ENCODE measurements at regions of chr20 and their contacts with region 1.

Region 1: DNA sequence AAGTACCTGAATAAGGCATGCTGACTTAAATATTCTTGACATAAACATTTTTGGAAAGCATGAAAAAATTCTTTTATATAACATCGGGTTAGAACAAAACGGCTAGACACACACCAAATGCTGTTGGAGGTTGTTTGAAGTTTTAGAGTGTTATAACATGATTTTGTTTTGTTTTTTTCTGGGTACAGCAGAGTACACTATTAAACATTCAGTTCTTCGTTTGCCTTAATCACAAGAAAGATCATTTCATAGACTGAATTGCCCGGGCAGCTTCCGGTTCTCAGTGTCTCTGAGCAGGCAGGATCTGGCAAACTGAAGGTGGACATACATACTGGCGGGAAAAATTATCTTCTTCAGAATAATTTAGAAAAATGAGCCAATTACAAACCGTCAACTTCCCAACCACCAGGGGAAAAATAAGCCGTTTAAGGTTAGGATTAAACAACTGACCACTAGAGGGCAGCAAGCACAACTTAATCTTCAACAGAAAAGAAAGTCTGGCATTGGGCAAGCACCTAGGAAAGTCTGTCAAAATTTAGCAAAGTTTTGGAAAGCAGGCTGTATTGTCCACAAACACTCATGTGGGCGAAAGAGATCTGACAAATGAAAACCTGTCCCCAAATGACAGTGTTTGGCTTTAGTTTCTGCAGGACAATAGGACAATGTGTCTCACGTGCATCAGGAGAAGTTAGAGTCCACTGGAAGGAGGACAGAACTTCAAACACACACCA is 15.0 kb downstream of the ZNF217 start:
- DNase-seq: peak; percentile 57 to 91 (median 72)
- ATAC-seq: peak; percentile 80
- H3K4me3 ChIP-seq: no peak overlapping the region
- H3K27ac ChIP-seq: peak overlapping the region; percentile 80
- H3K4me1 ChIP-seq: peaks cover 5 to 17% of the 10 kb centered on the region in 2 experiments; a peak in 4 of 5 replicates
- H3K27me3 ChIP-seq: no peaks in the 10 kb centered on the region
- CTCF ChIP-seq: peak; percentile 83 to 97 (median 97)
- EP300 ChIP-seq: peak; percentile 41
- POLR2A ChIP-seq: no peak
- RAD21 ChIP-seq: peak; percentile 88 to 94

Region 2: DNA sequence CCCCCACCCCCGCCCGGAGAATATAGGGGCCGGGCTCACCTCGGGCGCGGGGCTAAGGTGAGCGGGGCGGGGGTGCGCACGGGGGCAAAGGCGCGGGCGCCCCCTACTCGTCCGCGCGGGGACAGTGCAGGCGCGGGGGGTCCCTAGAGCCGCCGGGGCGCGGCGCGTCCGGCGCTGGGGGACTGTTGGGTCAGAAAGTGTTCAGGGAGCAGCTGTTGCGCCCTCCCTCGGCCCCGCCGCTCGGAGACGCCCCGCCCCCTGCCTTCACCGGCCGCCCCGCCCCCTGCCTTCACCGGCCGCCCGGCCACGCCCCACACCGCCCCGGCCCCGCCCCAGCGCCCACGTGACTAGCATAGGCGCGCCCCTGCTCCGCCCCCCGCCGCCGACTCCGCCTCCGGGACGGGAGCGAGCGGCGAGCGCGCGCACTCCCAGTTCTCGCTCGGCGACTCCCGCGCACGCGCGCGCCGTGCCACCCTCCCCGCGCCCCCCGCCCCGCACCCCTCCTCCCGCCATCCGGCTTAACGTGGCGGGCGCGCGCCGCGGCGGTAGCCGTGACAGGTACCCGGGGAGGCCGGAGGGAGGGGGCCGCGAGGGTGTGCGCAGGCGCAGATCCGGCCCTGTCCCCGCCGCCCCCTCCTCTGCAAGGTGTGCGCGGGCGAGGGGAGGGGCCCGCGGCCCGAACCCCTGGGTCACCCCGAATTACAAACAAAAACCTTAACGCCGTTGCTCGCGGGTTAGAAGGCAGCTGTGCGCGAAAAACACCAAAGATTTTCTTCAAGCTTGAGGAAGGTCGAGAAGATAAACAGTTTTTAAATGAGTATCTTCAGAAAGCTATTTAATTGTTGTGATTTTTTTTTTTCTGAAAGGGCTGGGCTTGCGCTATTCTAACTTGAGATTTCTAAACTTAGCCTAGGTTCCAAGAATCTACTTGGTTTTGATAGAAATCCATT is 15.7 kb after region 1 on chr20:
- CTCF ChIA-PET with region 1: no interaction called
- POLR2A ChIA-PET with region 1: interaction called, 3 read pairs
- in situ Hi-C with region 1: no loop called
- intact Hi-C with region 1: loop called (anchors 2 kb)
- DNase-seq: peak; percentile 85 to 92 (median 88)
- ATAC-seq: peak; percentile 76
- H3K4me3 ChIP-seq: peak overlapping the region; percentile 90
- H3K27ac ChIP-seq: peak overlapping the region; percentile 93
- H3K4me1 ChIP-seq: peaks cover 8 to 15% of the 10 kb centered on the region in 2 experiments; a peak in 4 of 5 replicates
- H3K27me3 ChIP-seq: no peaks in the 10 kb centered on the region
- CTCF ChIP-seq: peak in 2 of 3 experiments; percentile 59 to 79; a peak in 4 of 6 replicates
- EP300 ChIP-seq: no peak
- POLR2A ChIP-seq: no peak
- RAD21 ChIP-seq: peak; percentile 12 to 58; a peak in 2 of 4 replicates

Region 3: GRCh38 chr20:53643031-53643832 is 64.6 kb after region 1 on chr20:
- CTCF ChIA-PET with region 1: no interaction called
- POLR2A ChIA-PET with region 1: interaction called, 3 read pairs
- in situ Hi-C with region 1: no loop called
- intact Hi-C with region 1: loop called (anchors 2 kb)
- DNase-seq: peak; percentile 37 to 75 (median 52)
- ATAC-seq: peak; percentile 83
- H3K4me3 ChIP-seq: no peak overlapping the region; the same call in 1 of the 2 replicates
- H3K27ac ChIP-seq: peak overlapping the region; percentile 95
- H3K4me1 ChIP-seq: peaks cover 23 to 25% of the 10 kb centered on the region in 2 experiments
- H3K27me3 ChIP-seq: no peaks in the 10 kb centered on the region
- CTCF ChIP-seq: no peak
- EP300 ChIP-seq: peak; percentile 60; the same call in 1 of the 2 replicates
- POLR2A ChIP-seq: no peak; the same call in none of the 2 replicates
- RAD21 ChIP-seq: peak in 1 of 2 experiments; percentile 9; a peak in 1 of 4 replicates

Region 4: DNA sequence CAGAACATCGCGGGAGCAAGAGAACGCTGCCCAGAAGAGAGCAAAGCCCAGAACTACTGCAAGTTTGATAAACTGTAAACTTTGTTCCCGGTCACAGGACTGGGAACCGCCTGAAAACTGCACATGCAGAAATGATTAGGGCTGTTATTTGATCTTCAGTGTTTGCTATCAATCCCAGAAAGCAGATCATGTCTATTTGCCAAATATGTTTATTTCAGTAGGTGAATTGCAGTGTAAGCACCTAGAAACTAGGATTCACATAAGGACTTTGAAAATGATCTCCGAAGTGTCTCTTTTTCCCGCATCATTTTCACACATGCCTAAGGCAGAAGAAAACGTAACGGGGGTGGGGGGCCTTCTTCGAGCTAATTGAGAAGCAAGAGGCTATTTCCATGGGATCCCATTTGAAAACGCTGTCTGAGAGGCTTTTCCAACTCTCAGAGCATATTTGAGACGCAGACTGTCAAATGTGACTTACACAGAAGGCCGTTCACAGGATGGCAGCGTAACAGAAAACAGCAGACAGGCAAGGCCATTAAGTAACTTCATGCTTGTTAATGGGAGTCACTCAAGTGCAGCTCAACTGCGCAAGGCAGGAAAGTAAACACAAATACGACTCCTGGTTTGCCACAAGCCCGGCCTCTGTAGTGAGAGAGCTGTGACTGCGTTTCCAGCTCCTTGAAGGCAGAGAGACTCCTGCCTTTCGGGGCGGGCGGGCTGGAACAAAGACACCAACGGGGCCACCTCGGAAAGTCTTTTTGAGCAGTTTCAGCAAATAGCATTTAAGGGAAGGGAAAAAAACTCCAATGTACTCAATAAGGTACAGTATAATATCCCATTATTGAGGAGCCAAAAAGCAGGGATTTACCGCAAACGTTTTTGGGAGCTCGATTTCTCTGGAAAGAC is 159.6 kb after region 1 on chr20:
- CTCF ChIA-PET with region 1: no interaction called
- POLR2A ChIA-PET with region 1: interaction called, 3 read pairs
- in situ Hi-C with region 1: no loop called
- intact Hi-C with region 1: loop called (anchors 5 kb)
- DNase-seq: peak; percentile 35 to 86 (median 56)
- ATAC-seq: peak; percentile 73
- H3K4me3 ChIP-seq: 0 out of 2 replicates have a peak overlapping the region, but pooled peaks have one; percentile 1
- H3K27ac ChIP-seq: peak overlapping the region; percentile 83
- H3K4me1 ChIP-seq: peaks cover 7 to 40% of the 10 kb centered on the region in 2 experiments
- H3K27me3 ChIP-seq: no peaks in the 10 kb centered on the region
- CTCF ChIP-seq: no peak
- EP300 ChIP-seq: no peak
- POLR2A ChIP-seq: peak; percentile 63
- RAD21 ChIP-seq: peak in 1 of 2 experiments; percentile 15; a peak in 1 of 4 replicates

Region 5: DNA sequence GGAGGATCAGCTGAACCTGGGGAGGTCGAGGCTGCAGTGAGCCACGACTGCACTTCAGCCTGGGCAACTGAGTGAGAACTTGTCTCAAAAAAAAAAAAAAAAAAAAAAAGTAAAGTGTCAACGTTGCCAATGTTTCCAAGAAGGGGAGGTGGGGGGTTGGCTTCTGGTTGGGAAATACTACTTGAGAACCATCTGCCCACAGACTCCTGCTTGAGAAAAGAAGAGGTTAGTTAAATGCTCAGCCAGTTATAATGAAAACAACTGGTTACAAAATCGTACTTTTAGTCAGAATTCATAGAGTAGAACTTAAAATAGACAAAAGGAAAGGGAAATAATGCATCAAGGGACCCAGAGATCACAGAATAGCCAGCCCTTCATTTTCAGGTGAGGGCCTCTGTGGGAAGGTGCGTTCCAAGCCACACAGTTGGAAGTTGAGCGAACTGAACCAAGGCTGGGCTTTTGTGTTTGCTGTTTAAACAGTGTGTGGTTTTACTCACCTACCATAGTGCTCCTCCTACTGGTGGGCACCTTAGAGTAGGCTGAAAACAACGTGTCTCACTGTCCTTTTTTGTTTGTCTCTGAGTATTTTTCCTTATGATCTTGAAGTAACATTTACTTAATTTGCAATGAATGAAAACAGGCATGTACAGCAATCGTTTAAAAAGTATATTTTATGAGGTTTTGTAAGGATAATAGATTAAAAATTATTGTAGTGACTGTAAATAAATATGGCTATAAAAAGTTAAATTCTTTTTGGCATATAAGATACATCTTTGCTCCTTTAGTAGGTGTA is 291.0 kb after region 1 on chr20:
- CTCF ChIA-PET with region 1: interaction called, 12 read pairs
- POLR2A ChIA-PET with region 1: interaction called, 3 read pairs
- in situ Hi-C with region 1: no loop called
- intact Hi-C with region 1: no loop called
- DNase-seq: peak; percentile 54 to 90 (median 64)
- ATAC-seq: peak; percentile 93
- H3K4me3 ChIP-seq: no peak overlapping the region
- H3K27ac ChIP-seq: peak overlapping the region; percentile 48
- H3K4me1 ChIP-seq: peaks cover 2 to 10% of the 10 kb centered on the region in 2 experiments; a peak in 3 of 5 replicates
- H3K27me3 ChIP-seq: no peaks in the 10 kb centered on the region
- CTCF ChIP-seq: peak; percentile 75 to 88 (median 85)
- EP300 ChIP-seq: no peak
- POLR2A ChIP-seq: no peak
- RAD21 ChIP-seq: peak; percentile 88 to 90

Region 6: GRCh38 chr20:53915446-53916172 is 337.0 kb after region 1 on chr20:
- CTCF ChIA-PET with region 1: interaction called, 33 read pairs
- POLR2A ChIA-PET with region 1: interaction called, 5 read pairs
- in situ Hi-C with region 1: no loop called
- intact Hi-C with region 1: loop called (anchors 1 kb)
- DNase-seq: peak; percentile 84 to 93 (median 87)
- ATAC-seq: peak; percentile 84
- H3K4me3 ChIP-seq: peak overlapping the region; percentile 38
- H3K27ac ChIP-seq: peak overlapping the region; percentile 82
- H3K4me1 ChIP-seq: peaks cover 25 to 41% of the 10 kb centered on the region in 2 experiments; a peak in 3 of 5 replicates
- H3K27me3 ChIP-seq: no peaks in the 10 kb centered on the region
- CTCF ChIP-seq: peak; percentile 76 to 91 (median 87)
- EP300 ChIP-seq: no peak
- POLR2A ChIP-seq: no peak; the same call in 1 of the 2 replicates
- RAD21 ChIP-seq: peak; percentile 78 to 85

Region 7: GRCh38 chr20:54062812-54063280 is 484.2 kb after region 1 on chr20:
- CTCF ChIA-PET with region 1: no interaction called
- POLR2A ChIA-PET with region 1: no interaction called
- in situ Hi-C with region 1: no loop called
- intact Hi-C with region 1: loop called (anchors 10 kb)
- DNase-seq: peak in 2 of 4 experiments; percentile 59 to 62
- ATAC-seq: peak; percentile 76
- H3K4me3 ChIP-seq: no peak overlapping the region
- H3K27ac ChIP-seq: no peak overlapping the region
- H3K4me1 ChIP-seq: peaks cover 16 to 25% of the 10 kb centered on the region in 2 experiments; a peak in 4 of 5 replicates
- H3K27me3 ChIP-seq: no peaks in the 10 kb centered on the region
- CTCF ChIP-seq: peak; percentile 60 to 85 (median 75)
- EP300 ChIP-seq: no peak
- POLR2A ChIP-seq: no peak
- RAD21 ChIP-seq: peak; percentile 82 to 85